Gastrocnemius medialis (tissue), 4 donors: ENCODE measurements at regions of chr11 and their contacts with region 1.

Region 1: DNA sequence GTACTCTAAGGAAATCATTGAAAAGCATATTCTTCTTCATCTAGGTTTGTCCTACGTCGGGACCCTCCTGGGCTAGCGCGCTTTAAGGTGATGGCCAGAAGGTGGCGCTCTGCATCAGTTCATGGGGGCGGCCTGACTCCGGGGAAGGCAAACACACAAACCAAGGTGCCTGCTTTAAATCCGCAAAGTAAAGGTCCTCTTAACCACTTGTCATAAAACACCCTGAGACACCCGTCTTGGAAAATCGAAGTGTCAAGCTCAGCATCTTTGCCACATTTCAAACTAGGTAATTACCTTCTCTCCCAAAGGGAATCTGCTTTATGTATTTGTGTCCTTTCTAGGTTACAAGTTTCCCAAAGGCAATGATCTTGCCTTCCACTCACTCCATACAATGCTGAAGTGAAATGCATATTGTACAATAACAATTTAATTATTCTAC is 33.9 kb downstream of the LMO2 start:
- DNase-seq: peak; percentile 54 to 60
- ATAC-seq: peak; percentile 80 to 93
- H3K4me3 ChIP-seq: no peak overlapping the region
- H3K27ac ChIP-seq: no peak overlapping the region
- H3K4me1 ChIP-seq: no peaks in the 10 kb centered on the region
- H3K27me3 ChIP-seq: no peaks in the 10 kb centered on the region
- CTCF ChIP-seq: peak; percentile 87 to 95 (median 90)
- POLR2A ChIP-seq: no peak

Region 2: GRCh38 chr11:33965032-33965431 is 107.1 kb after region 1 on chr11:
- in situ Hi-C with region 1: loop called (anchors 5 kb)
- intact Hi-C with region 1: no loop called
- DNase-seq: no peak
- ATAC-seq: no peak
- H3K4me3 ChIP-seq: no peak overlapping the region
- H3K27ac ChIP-seq: no peak overlapping the region
- H3K4me1 ChIP-seq: no peaks in the 10 kb centered on the region
- H3K27me3 ChIP-seq: no peaks in the 10 kb centered on the region
- CTCF ChIP-seq: no peak
- POLR2A ChIP-seq: no peak

Region 3: GRCh38 chr11:33970984-33971466 is 113.1 kb after region 1 on chr11:
- in situ Hi-C with region 1: loop called (anchors 5 kb)
- intact Hi-C with region 1: loop called (anchors 1 kb)
- DNase-seq: peak; percentile 32 to 51
- ATAC-seq: peak; percentile 96 to 97
- H3K4me3 ChIP-seq: no peak overlapping the region
- H3K27ac ChIP-seq: no peak overlapping the region
- H3K4me1 ChIP-seq: no peaks in the 10 kb centered on the region
- H3K27me3 ChIP-seq: no peaks in the 10 kb centered on the region
- CTCF ChIP-seq: peak; percentile 71 to 77 (median 74)
- POLR2A ChIP-seq: no peak

Region 4: GRCh38 chr11:33987975-33988580 is 130.1 kb after region 1 on chr11:
- in situ Hi-C with region 1: no loop called
- intact Hi-C with region 1: loop called (anchors 1 kb)
- DNase-seq: peak; percentile 34 to 51
- ATAC-seq: peak in 1 of 2 donors; percentile 79
- H3K4me3 ChIP-seq: no peak overlapping the region
- H3K27ac ChIP-seq: no peak overlapping the region
- H3K4me1 ChIP-seq: no peaks in the 10 kb centered on the region
- H3K27me3 ChIP-seq: no peaks in the 10 kb centered on the region
- CTCF ChIP-seq: peak; percentile 38 to 79 (median 68)
- POLR2A ChIP-seq: no peak

Region 5: DNA sequence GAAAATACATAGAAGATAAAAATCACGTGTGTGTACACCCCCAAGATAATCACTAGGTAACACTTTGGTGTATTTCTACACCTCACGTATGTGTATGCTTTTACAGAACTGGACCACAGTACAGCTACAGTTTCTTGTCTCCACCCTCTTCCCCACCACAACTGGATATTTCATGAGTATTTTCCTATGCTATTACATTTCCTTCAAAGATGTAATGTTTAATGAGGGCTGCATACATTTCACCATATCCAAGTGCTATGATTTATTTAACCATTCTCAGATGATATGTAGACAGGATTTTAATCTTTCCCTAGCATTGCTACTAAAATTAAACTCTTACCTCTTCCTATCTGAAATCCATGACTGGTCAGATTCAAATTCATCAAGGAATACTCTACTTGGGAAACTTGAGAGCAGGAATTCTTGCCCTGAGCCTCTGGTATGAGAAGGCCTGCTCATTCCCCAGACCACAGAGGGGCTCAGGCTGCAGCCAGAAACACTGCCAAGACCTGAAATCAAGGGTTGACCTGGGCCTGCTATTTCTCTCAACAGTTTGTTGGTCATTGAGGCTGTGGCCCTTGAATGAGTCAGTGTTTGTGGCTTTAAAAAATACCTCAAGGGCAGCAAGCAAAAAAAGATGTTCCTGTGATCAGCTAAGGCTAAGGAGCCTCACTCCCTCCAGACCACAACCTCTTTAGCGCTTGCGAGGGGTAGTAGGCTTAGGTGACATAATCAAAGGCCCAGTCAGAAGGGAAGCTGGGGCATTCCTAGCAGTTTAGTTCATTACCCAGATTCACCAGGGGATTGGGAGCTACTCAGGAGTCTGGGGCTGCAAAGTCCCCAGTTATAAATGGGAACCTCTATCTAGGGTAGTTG is 444.3 kb after region 1 on chr11:
- in situ Hi-C with region 1: no loop called
- intact Hi-C with region 1: no loop called
- DNase-seq: no peak
- ATAC-seq: peak; percentile 31 to 58
- H3K4me3 ChIP-seq: no peak overlapping the region
- H3K27ac ChIP-seq: peak overlapping the region; percentile 50 to 63 (median 55)
- H3K4me1 ChIP-seq: peaks cover 33 to 39% of the 10 kb centered on the region in 2 donors
- H3K27me3 ChIP-seq: no peaks in the 10 kb centered on the region
- CTCF ChIP-seq: no peak
- POLR2A ChIP-seq: no peak